ENCODE measurements at regions of chr11 and their contacts with region 1.

Region 1: DNA sequence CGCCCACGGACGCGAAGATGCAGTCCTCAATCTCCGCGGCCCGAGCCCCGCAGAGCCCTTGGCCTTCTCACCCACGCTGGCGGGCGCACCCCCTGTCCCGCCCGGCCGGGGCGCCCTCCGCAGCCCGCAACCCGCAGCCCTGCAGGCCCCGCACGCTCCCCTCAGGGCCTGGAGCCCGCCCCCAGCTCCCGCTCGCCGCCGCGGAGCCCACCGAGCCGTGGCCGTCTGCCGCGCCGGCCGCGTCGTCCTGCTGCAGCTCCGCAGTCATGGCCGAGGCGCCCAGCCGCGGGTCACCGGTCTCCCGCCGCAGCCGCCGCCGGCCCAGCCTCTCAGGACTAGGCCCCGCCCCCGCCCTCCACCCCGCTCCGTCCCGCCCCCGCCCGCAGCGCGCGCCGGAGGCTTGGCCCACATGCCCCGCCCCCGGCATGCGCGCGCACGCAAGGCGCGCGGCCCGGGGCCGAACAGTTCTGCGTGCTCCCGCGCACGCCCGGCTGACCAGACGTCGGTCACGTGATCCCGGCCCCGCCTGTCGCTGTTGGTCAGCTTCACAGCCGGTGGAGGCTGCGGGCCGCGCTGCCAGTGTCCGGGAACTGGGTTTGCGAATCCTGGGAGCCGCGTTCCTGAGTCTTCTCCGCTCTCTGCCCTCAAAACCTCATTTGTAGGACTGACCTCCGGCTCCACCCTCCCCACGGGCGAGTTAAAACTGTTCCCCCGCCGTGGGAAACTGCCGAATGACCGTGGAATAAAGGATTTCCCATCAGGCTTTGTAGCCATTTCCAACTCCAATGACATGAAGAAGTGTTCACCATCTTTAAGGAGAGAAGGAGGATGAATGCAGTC is at the start of gene USP28:
- DNase-seq: peak; percentile 85
- ATAC-seq: peak; percentile 84
- H3K4me3 ChIP-seq: peak within 1 kb of the TSS; percentile 75 to 80
- H3K27ac ChIP-seq: peak within 1 kb of the TSS; percentile 77
- H3K4me1 ChIP-seq: peaks cover 0 to 22% of the 10 kb centered on the region in 2 experiments; a peak in 3 of 4 replicates
- H3K27me3 ChIP-seq: no peaks in the 10 kb centered on the region
- CTCF ChIP-seq: 0 out of 6 replicates have a peak, but pooled peaks of 1 of the 3 experiments have one; percentile 7
- POLR2A ChIP-seq: peak; percentile 87
- RAD21 ChIP-seq: no peak
- total RNA-seq, gene USP28: 23.5 TPM

Region 2: GRCh38 chr11:113314389-113315301 is 560.8 kb before region 1 on chr11 and contains the start of gene TTC12:
- CTCF ChIA-PET with region 1: no interaction called
- POLR2A ChIA-PET with region 1: no interaction called
- RAD21 ChIA-PET with region 1: no interaction called
- intact Hi-C with region 1: loop called (anchors 10 kb)
- DNase-seq: peak; percentile 73
- ATAC-seq: peak; percentile 97
- H3K4me3 ChIP-seq: peak within 1 kb of the TSS; percentile 77 to 82
- H3K27ac ChIP-seq: peak within 1 kb of the TSS; percentile 67
- H3K4me1 ChIP-seq: peaks cover 8 to 15% of the 10 kb centered on the region in 2 experiments; a peak in 3 of 4 replicates
- H3K27me3 ChIP-seq: no peaks in the 10 kb centered on the region
- CTCF ChIP-seq: no peak
- POLR2A ChIP-seq: peak; percentile 60
- RAD21 ChIP-seq: no peak
- total RNA-seq, gene TTC12: 12.6 TPM

Region 3: GRCh38 chr11:114148013-114148382 is 272.5 kb after region 1 on chr11:
- CTCF ChIA-PET with region 1: no interaction called
- POLR2A ChIA-PET with region 1: no interaction called
- RAD21 ChIA-PET with region 1: no interaction called
- intact Hi-C with region 1: no loop called
- DNase-seq: no peak
- ATAC-seq: no peak
- H3K4me3 ChIP-seq: no peak overlapping the region
- H3K27ac ChIP-seq: no peak overlapping the region
- H3K4me1 ChIP-seq: no peaks in the 10 kb centered on the region
- H3K27me3 ChIP-seq: peaks cover 80% of the 10 kb centered on the region
- CTCF ChIP-seq: no peak
- POLR2A ChIP-seq: no peak
- RAD21 ChIP-seq: no peak

Region 4: GRCh38 chr11:114606003-114606801 is 730.7 kb after region 1 on chr11:
- CTCF ChIA-PET with region 1: no interaction called
- POLR2A ChIA-PET with region 1: no interaction called
- RAD21 ChIA-PET with region 1: no interaction called
- intact Hi-C with region 1: no loop called
- DNase-seq: no peak
- ATAC-seq: no peak
- H3K4me3 ChIP-seq: no peak overlapping the region
- H3K27ac ChIP-seq: no peak overlapping the region
- H3K4me1 ChIP-seq: no peaks in the 10 kb centered on the region
- H3K27me3 ChIP-seq: no peaks in the 10 kb centered on the region
- CTCF ChIP-seq: no peak
- POLR2A ChIP-seq: no peak
- RAD21 ChIP-seq: no peak